ENCODE measurements at regions of chr6 and their contacts with region 1.

Region 1: GRCh38 chr6:16420715-16421461 is 182.5 kb downstream of the GMPR start:
- DNase-seq: peak; percentile 64
- CTCF ChIP-seq: no peak

Region 2: DNA sequence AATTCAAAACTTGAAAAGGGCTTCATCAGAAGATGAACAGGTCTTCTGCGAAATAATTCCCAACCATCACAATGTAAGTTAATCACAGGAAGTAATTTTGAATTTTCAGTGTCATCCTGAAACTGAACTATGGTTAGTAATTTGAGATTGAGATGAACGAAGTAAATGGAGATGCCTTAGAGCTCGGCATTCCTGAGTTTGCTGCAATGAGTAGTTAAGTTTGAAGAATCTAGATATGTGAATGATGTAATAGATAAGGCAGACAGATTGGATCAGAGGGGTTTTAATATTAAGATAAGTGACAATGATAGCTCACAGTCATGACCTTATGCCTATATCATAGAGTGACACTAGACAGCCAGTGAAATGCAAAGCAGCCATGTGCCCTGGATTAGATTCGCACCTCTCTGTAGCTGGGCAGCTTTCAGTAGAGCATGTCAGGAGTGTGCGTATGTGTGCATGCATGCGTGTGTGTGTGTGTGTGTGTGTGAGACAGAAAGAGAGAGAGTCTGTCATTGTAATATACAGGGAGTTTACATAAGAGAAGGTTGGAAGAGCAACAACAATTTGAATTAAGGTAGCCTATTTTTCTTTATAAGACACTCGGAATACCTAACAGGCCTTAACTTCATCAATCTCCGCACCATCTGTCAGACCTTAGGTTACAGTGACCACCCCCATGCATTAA is 50.5 kb after region 1 on chr6:
- in situ Hi-C with region 1: loop called (anchors 5 kb)
- DNase-seq: peak; percentile 32
- CTCF ChIP-seq: no peak

Measured in GM13976 (cell line).